T-cell (primary cell): ENCODE measurements at regions of chr13 and their contacts with region 1.

Region 1: GRCh38 chr13:52652196-52652979 is at the start of gene SUGT1:
- DNase-seq: peak; percentile 89 to 97 (median 94)
- ATAC-seq: peak; percentile 92 to 98 (median 96)
- H3K4me3 ChIP-seq: peak within 1 kb of the TSS; percentile 80
- H3K4me3 Mint-ChIP-seq: no peak within 1 kb of the TSS
- H3K27ac ChIP-seq: peak within 1 kb of the TSS; percentile 89
- H3K27ac Mint-ChIP-seq: no peak within 1 kb of the TSS
- H3K4me1 ChIP-seq: peaks cover 18 to 22% of the 10 kb centered on the region in 2 experiments
- H3K4me1 Mint-ChIP-seq: peaks cover 9 to 14% (median 14%) of the 10 kb centered on the region in 3 donors
- H3K27me3 ChIP-seq: no peaks in the 10 kb centered on the region
- H3K27me3 Mint-ChIP-seq: no peaks in the 10 kb centered on the region
- total RNA-seq, gene SUGT1: 28.2 to 33.1 (median 28.6) TPM

Region 2: GRCh38 chr13:52597676-52598075 is 54.7 kb before region 1 on chr13:
- CTCF ChIA-PET with region 1: no interaction called
- POLR2A ChIA-PET with region 1: no interaction called
- DNase-seq: no peak
- ATAC-seq: no peak
- H3K4me3 ChIP-seq: no peak overlapping the region
- H3K4me3 Mint-ChIP-seq: no peak overlapping the region
- H3K27ac ChIP-seq: no peak overlapping the region
- H3K27ac Mint-ChIP-seq: no peak overlapping the region
- H3K4me1 ChIP-seq: peaks cover 0 to 10% of the 10 kb centered on the region in 2 experiments
- H3K4me1 Mint-ChIP-seq: peaks cover 9 to 11% (median 10%) of the 10 kb centered on the region in 3 donors
- H3K27me3 ChIP-seq: peaks cover 0 to 34% of the 10 kb centered on the region in 2 experiments
- H3K27me3 Mint-ChIP-seq: peaks cover 24 to 49% of the 10 kb centered on the region in 2 donors

Region 3: DNA sequence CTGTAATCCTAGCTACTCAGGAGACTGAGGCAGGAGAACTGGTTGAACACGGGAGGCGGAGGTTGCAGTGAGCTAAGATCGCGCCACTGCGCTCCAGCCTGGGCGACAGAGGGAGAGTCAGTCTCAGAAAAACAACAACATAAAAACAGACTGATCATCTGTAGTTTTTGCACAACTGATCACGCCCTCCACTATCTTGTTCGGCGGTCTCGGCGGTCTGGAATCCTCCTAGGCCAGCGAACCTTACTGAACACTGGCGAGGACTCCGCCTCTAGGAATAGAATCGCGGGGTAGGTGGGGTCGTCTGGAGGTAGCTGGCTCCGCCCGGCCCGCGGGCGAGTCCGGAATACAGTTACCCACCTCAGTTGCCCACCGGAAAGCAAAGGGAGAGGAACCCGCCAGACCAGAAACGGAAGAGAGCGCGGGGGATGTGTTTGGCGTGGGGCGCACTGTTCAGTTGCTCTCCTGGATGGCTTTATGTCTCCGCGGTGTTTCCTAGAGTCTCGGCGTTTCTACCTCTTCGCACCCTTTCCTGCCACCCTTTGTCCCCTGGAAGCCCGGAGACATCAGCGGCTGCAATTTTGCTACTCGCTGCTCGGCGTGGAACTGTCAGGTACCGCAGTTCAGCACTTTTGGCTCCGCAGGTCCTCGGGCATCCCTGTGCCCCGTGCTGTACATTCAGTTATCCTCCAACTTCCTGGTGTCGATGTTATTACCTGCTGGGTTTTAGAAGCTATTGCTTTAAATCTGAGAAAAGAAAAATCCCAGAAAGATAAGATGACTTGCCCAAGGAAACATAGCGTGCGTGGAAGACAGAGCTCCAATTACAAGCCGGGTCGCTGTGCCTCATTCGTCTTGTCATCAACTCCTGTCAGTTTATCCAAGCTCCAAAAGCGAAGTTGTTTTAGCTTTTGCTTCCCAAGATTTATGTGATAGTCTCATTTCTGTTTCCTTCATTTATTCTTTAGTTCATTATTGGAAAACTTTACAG is 35.0 kb before region 1 on chr13:
- CTCF ChIA-PET with region 1: interaction called, 4 to 40 read pairs
- POLR2A ChIA-PET with region 1: interaction called, 10 to 11 read pairs
- DNase-seq: peak; percentile 67 to 89 (median 79)
- ATAC-seq: peak; percentile 95 to 97 (median 96)
- H3K4me3 ChIP-seq: peak overlapping the region; percentile 76 to 96
- H3K4me3 Mint-ChIP-seq: peak overlapping the region; percentile 97 to 98 (median 98)
- H3K27ac ChIP-seq: peak overlapping the region; percentile 50
- H3K27ac Mint-ChIP-seq: peak overlapping the region; percentile 95 to 98
- H3K4me1 ChIP-seq: peaks cover 3 to 22% of the 10 kb centered on the region in 2 experiments
- H3K4me1 Mint-ChIP-seq: peaks cover 32 to 49% (median 37%) of the 10 kb centered on the region in 3 donors
- H3K27me3 ChIP-seq: no peaks in the 10 kb centered on the region
- H3K27me3 Mint-ChIP-seq: no peaks in the 10 kb centered on the region

Region 4: GRCh38 chr13:52665325-52665724 is 12.9 kb after region 1 on chr13:
- CTCF ChIA-PET with region 1: interaction called in 1 of 2 experiments, 28 read pairs
- POLR2A ChIA-PET with region 1: interaction called, 3 to 5 read pairs
- DNase-seq: peak in 2 of 35 experiments; percentile 1 to 48
- ATAC-seq: peak in 1 of 4 experiments; percentile 19
- H3K4me3 ChIP-seq: no peak overlapping the region
- H3K4me3 Mint-ChIP-seq: no peak overlapping the region
- H3K27ac ChIP-seq: peak overlapping the region; percentile 21
- H3K27ac Mint-ChIP-seq: no peak overlapping the region
- H3K4me1 ChIP-seq: no peaks in the 10 kb centered on the region
- H3K4me1 Mint-ChIP-seq: peaks cover 4 to 6% (median 6%) of the 10 kb centered on the region in 3 donors
- H3K27me3 ChIP-seq: no peaks in the 10 kb centered on the region
- H3K27me3 Mint-ChIP-seq: no peaks in the 10 kb centered on the region